ENCODE measurements at regions of chr12 and their contacts with region 1.

Region 1: GRCh38 chr12:55908726-55909512 is 18.8 kb downstream of the PYM1 start:
- DNase-seq: no peak
- ATAC-seq: no peak
- H3K4me3 Mint-ChIP-seq: no peak overlapping the region
- H3K27ac Mint-ChIP-seq: peak overlapping the region; percentile 23
- H3K4me1 Mint-ChIP-seq: peaks cover 17% of the 10 kb centered on the region
- H3K27me3 Mint-ChIP-seq: no peaks in the 10 kb centered on the region

Region 2: DNA sequence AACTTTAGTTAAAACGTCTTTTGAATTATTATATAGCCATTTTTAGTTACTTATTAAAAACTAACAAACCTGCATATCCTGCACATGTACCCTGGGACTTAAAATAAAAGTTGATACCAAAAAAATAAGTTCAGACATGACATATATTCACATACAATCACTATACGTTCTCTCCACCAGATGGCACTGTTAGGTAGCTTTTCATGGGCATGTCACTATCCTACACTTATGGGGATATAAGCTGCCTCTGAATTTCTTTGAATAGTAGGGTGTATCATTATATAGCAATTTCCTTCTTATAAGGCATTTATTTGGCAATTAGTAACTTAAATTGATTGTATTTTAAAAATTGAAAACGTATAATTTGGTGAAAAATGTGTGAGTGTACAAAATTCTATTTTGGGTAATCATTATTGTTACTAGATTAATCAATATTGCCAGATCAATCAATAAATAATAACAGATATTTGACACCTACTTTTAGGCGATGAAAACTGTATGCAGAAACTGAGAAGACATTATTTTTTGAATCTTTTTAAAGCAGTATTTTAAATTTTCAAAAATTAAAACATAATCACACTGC is 719.9 kb before region 1 on chr12:
- CTCF ChIA-PET with region 1: no interaction called
- POLR2A ChIA-PET with region 1: no interaction called
- intact Hi-C with region 1: no loop called
- DNase-seq: peak; percentile 59
- ATAC-seq: peak; percentile 81
- H3K4me3 Mint-ChIP-seq: no peak overlapping the region
- H3K27ac Mint-ChIP-seq: no peak overlapping the region
- H3K4me1 Mint-ChIP-seq: no peaks in the 10 kb centered on the region
- H3K27me3 Mint-ChIP-seq: peaks cover 32% of the 10 kb centered on the region

Region 3: GRCh38 chr12:55850893-55851292 is 58.0 kb before region 1 on chr12:
- CTCF ChIA-PET with region 1: interaction called, 3 read pairs
- POLR2A ChIA-PET with region 1: interaction called, 14 read pairs
- intact Hi-C with region 1: no loop called
- DNase-seq: no peak
- ATAC-seq: no peak
- H3K4me3 Mint-ChIP-seq: no peak overlapping the region
- H3K27ac Mint-ChIP-seq: no peak overlapping the region
- H3K4me1 Mint-ChIP-seq: peaks cover 14% of the 10 kb centered on the region
- H3K27me3 Mint-ChIP-seq: peaks cover 2% of the 10 kb centered on the region